HepG2 (cell line): ENCODE measurements at regions of chr22 and their contacts with region 1.

Region 1: GRCh38 chr22:50582562-50583293 is at the start of gene CHKB:
- DNase-seq: peak; percentile 95
- ATAC-seq: peak; percentile 96
- H3K4me3 ChIP-seq: peak within 1 kb of the TSS; percentile 70 to 91 (median 87)
- H3K27ac ChIP-seq: peak within 1 kb of the TSS; percentile 98
- H3K4me1 ChIP-seq: peaks cover 32% of the 10 kb centered on the region
- H3K27me3 ChIP-seq: no peaks in the 10 kb centered on the region
- CTCF ChIP-seq: 0 out of 2 replicates have a peak, but pooled peaks have one; percentile 4
- EP300 ChIP-seq: no peak
- POLR2A ChIP-seq: peak; percentile 61 to 88
- RAD21 ChIP-seq: peak; percentile 46
- total RNA-seq, gene CHKB: 9.9 and 24.5 TPM in 2 replicates

Region 2: GRCh38 chr22:50507991-50508884 is 74.5 kb before region 1 on chr22 and contains the start of gene NCAPH2:
- CTCF ChIA-PET with region 1: no interaction called
- POLR2A ChIA-PET with region 1: interaction called, 10 read pairs
- in situ Hi-C with region 1: no loop called
- intact Hi-C with region 1: no loop called
- DNase-seq: peak; percentile 89
- ATAC-seq: peak; percentile 42
- H3K4me3 ChIP-seq: peak within 1 kb of the TSS; percentile 90 to 99 (median 93)
- H3K27ac ChIP-seq: peak within 1 kb of the TSS; percentile 87
- H3K4me1 ChIP-seq: peaks cover 19% of the 10 kb centered on the region
- H3K27me3 ChIP-seq: no peaks in the 10 kb centered on the region; a peak in 1 of 5 replicates
- CTCF ChIP-seq: peak; percentile 50
- EP300 ChIP-seq: peak; percentile 42 to 53; a peak in 1 of 4 replicates
- POLR2A ChIP-seq: peak; percentile 81 to 87
- RAD21 ChIP-seq: no peak
- total RNA-seq, gene NCAPH2: 44.1 and 64.4 TPM in 2 replicates

Region 3: GRCh38 chr22:50562523-50563412 is 20.0 kb before region 1 on chr22 and contains the start of gene SYCE3:
- CTCF ChIA-PET with region 1: no interaction called
- POLR2A ChIA-PET with region 1: interaction called, 29 read pairs
- in situ Hi-C with region 1: no loop called
- intact Hi-C with region 1: no loop called
- DNase-seq: peak; percentile 92
- ATAC-seq: peak; percentile 95
- H3K4me3 ChIP-seq: peak within 1 kb of the TSS; percentile 68 to 85 (median 71)
- H3K27ac ChIP-seq: peak within 1 kb of the TSS; percentile 55
- H3K4me1 ChIP-seq: peaks cover 12% of the 10 kb centered on the region
- H3K27me3 ChIP-seq: peaks cover 0 to 22% of the 10 kb centered on the region in 2 experiments; a peak in 2 of 5 replicates
- CTCF ChIP-seq: peak; percentile 95
- EP300 ChIP-seq: no peak
- POLR2A ChIP-seq: peak; percentile 31 to 86; a peak in 2 of 4 replicates
- RAD21 ChIP-seq: peak; percentile 90
- total RNA-seq, gene SYCE3: not detected in 2 replicates

Region 4: DNA sequence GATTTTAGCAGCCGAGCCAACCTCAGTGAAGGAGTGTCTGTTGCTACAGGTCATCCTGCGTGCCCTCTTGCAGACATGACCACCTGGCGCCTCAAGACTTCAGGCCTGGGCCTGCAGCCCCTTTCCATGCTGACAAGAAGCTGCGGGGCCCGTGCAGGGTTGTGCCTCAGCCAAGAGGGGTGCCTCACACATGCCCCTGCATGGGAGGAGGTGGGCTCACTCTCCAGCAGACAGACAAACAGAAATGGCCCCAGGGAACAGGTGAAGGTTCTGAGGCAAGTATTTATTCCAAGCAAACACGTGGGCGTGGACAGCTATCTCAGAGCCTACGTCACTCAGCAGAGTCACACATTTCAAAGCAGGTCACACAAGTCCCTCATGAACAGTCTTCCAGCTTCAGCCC is 14.1 kb before region 1 on chr22:
- CTCF ChIA-PET with region 1: no interaction called
- POLR2A ChIA-PET with region 1: interaction called, 30 read pairs
- in situ Hi-C with region 1: no loop called
- intact Hi-C with region 1: no loop called
- DNase-seq: peak; percentile 83
- ATAC-seq: peak; percentile 71
- H3K4me3 ChIP-seq: peak overlapping the region in 1 of 3 experiments; percentile 7; a peak in 1 of 6 replicates
- H3K27ac ChIP-seq: peak overlapping the region; percentile 83
- H3K4me1 ChIP-seq: peaks cover 39% of the 10 kb centered on the region
- H3K27me3 ChIP-seq: no peaks in the 10 kb centered on the region
- CTCF ChIP-seq: no peak
- EP300 ChIP-seq: peak in 1 of 2 experiments; percentile 29; a peak in 1 of 4 replicates
- POLR2A ChIP-seq: peak in 1 of 2 experiments; percentile 43; a peak in 1 of 4 replicates
- RAD21 ChIP-seq: no peak

Region 5: DNA sequence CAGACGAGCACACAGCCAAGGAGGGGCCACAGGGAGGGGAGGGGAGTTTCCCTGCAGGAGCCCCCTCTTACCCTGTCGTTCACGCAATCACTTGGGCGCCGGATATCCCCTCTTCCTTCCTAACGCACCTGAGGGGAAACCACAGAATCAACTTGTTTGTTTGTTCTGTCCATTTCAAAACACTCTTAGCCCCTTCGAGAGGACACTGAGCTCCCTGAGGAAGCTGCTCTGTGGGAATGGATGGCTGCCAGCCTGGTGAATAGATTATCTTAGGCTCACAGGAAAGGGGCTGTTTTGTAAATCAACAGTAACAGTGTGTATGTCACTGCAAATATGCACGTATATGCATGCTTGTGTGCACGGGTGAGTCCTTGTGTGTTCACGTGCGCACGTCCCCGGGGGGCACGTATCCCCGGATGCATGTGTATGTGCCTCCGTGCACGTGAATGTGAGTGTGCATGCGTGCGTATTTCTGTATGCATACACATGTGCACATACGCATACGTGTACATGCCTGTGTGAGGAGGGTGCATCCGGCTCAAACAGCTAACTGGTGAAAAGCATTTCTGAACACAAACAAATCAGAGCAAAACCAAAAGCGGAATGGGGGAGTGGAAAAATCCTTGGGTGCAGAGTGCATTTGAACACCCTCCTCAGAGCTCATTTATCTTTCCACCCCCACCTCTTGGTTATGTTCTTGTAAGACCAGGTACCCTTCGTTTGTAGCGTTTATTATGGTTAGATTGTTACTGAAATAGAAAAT is 38.0 kb after region 1 on chr22:
- CTCF ChIA-PET with region 1: interaction called, 37 read pairs
- POLR2A ChIA-PET with region 1: interaction called, 11 read pairs
- in situ Hi-C with region 1: no loop called
- intact Hi-C with region 1: loop called (anchors 1 kb)
- DNase-seq: peak; percentile 25
- ATAC-seq: peak; percentile 67
- H3K4me3 ChIP-seq: peak overlapping the region; percentile 46 to 61 (median 47)
- H3K27ac ChIP-seq: no peak overlapping the region
- H3K4me1 ChIP-seq: peaks cover 54% of the 10 kb centered on the region
- H3K27me3 ChIP-seq: no peaks in the 10 kb centered on the region
- CTCF ChIP-seq: peak; percentile 82
- EP300 ChIP-seq: no peak
- POLR2A ChIP-seq: no peak
- RAD21 ChIP-seq: no peak

Region 6: GRCh38 chr22:50641696-50642607 is 59.2 kb after region 1 on chr22:
- CTCF ChIA-PET with region 1: no interaction called
- POLR2A ChIA-PET with region 1: interaction called, 15 read pairs
- in situ Hi-C with region 1: no loop called
- intact Hi-C with region 1: no loop called
- DNase-seq: peak; percentile 95
- ATAC-seq: peak; percentile 86
- H3K4me3 ChIP-seq: peak overlapping the region; percentile 38 to 62 (median 38); a peak in 5 of 6 replicates
- H3K27ac ChIP-seq: peak overlapping the region; percentile 94
- H3K4me1 ChIP-seq: peaks cover 60% of the 10 kb centered on the region
- H3K27me3 ChIP-seq: no peaks in the 10 kb centered on the region
- CTCF ChIP-seq: peak; percentile 60
- EP300 ChIP-seq: peak; percentile 24 to 86; a peak in 3 of 4 replicates
- POLR2A ChIP-seq: peak; percentile 18 to 40; a peak in 2 of 4 replicates
- RAD21 ChIP-seq: peak; percentile 60

Region 7: GRCh38 chr22:50696797-50697561 is 114.3 kb after region 1 on chr22:
- CTCF ChIA-PET with region 1: no interaction called
- POLR2A ChIA-PET with region 1: interaction called, 11 read pairs
- in situ Hi-C with region 1: loop called (anchors 5 kb)
- intact Hi-C with region 1: no loop called
- DNase-seq: no peak
- ATAC-seq: no peak
- H3K4me3 ChIP-seq: peak overlapping the region in 2 of 3 experiments; percentile 82 to 89; a peak in 3 of 6 replicates
- H3K27ac ChIP-seq: no peak overlapping the region
- H3K4me1 ChIP-seq: peaks cover 42% of the 10 kb centered on the region
- H3K27me3 ChIP-seq: no peaks in the 10 kb centered on the region
- CTCF ChIP-seq: no peak
- EP300 ChIP-seq: no peak
- POLR2A ChIP-seq: no peak
- RAD21 ChIP-seq: no peak